Activated CD4-positive, alpha-beta T cell treated with anti-CD3 and anti-CD28 coated beads for 36 hours (primary cell): ENCODE measurements at regions of chr2 and their contacts with region 1.

Region 1: GRCh38 chr2:31688282-31688681 is 107.5 kb upstream of the SRD5A2 start:
- DNase-seq: peak; percentile 16
- ATAC-seq: no peak
- H3K4me3 Mint-ChIP-seq: no peak overlapping the region
- H3K27ac Mint-ChIP-seq: no peak overlapping the region
- H3K4me1 Mint-ChIP-seq: no peaks in the 10 kb centered on the region
- H3K27me3 Mint-ChIP-seq: peaks cover 2% of the 10 kb centered on the region

Region 2: GRCh38 chr2:31654241-31654640 is 34.0 kb before region 1 on chr2:
- CTCF ChIA-PET with region 1: no interaction called
- POLR2A ChIA-PET with region 1: no interaction called
- intact Hi-C with region 1: no loop called
- DNase-seq: no peak
- ATAC-seq: no peak
- H3K4me3 Mint-ChIP-seq: no peak overlapping the region
- H3K27ac Mint-ChIP-seq: no peak overlapping the region
- H3K4me1 Mint-ChIP-seq: no peaks in the 10 kb centered on the region
- H3K27me3 Mint-ChIP-seq: peaks cover 11% of the 10 kb centered on the region

Region 3: GRCh38 chr2:31729764-31730092 is 41.4 kb after region 1 on chr2:
- CTCF ChIA-PET with region 1: no interaction called
- POLR2A ChIA-PET with region 1: no interaction called
- intact Hi-C with region 1: no loop called
- DNase-seq: no peak
- ATAC-seq: no peak
- H3K4me3 Mint-ChIP-seq: no peak overlapping the region
- H3K27ac Mint-ChIP-seq: no peak overlapping the region
- H3K4me1 Mint-ChIP-seq: no peaks in the 10 kb centered on the region
- H3K27me3 Mint-ChIP-seq: peaks cover 5% of the 10 kb centered on the region

Region 4: DNA sequence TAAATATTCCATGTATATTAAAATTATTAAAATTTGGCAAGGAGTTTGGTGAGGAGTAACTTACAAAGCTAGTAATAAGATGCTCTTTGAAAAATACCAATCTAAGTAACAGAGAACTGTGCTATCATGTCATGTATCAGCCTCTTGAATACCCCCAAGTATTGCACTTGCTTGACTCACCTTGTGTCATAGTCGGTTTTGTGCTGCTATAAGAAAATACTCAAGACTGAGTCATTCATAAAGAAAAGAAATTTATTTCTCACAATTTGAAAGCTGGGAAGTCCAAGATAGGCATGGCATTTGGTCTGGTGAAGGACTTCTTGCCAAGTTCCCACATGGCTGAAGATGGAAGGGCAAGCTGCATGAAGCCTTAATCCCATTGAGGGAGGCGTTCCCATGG is 143.3 kb after region 1 on chr2:
- CTCF ChIA-PET with region 1: no interaction called
- POLR2A ChIA-PET with region 1: no interaction called
- intact Hi-C with region 1: loop called in 1 of 2 experiments (anchors 2 kb)
- DNase-seq: no peak
- ATAC-seq: no peak
- H3K4me3 Mint-ChIP-seq: no peak overlapping the region
- H3K27ac Mint-ChIP-seq: no peak overlapping the region
- H3K4me1 Mint-ChIP-seq: no peaks in the 10 kb centered on the region
- H3K27me3 Mint-ChIP-seq: peaks cover 6% of the 10 kb centered on the region

Region 5: DNA sequence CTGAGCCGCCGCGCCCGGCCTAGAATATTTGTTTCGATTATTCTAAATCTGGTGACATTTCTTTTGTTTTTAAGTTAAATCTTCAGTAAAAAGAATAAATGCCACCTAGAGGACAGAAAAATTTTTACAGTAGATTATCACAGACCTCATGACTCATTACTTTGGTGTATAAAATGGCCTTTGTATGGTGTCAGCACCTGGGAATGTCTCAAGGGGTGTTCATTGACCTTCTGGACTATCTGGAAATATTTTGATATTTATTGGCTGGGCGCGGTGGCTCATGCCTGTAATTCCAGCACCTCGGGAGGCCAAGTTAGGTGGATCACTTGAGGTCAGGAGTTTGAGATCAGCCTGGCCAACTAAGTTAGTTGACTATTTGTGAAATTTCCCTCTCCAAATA is 447.1 kb after region 1 on chr2:
- CTCF ChIA-PET with region 1: no interaction called
- POLR2A ChIA-PET with region 1: no interaction called
- intact Hi-C with region 1: loop called in 1 of 2 experiments (anchors 10 kb)
- DNase-seq: no peak
- ATAC-seq: peak; percentile 64
- H3K4me3 Mint-ChIP-seq: no peak overlapping the region
- H3K27ac Mint-ChIP-seq: no peak overlapping the region
- H3K4me1 Mint-ChIP-seq: no peaks in the 10 kb centered on the region
- H3K27me3 Mint-ChIP-seq: no peaks in the 10 kb centered on the region